ENCODE measurements at regions of chr19 and their contacts with region 1.

Region 1: GRCh38 chr19:57814505-57815251 is at the start of gene ZNF552:
- DNase-seq: peak; percentile 70 to 93 (median 89)
- H3K4me3 ChIP-seq: peak within 1 kb of the TSS; percentile 67 to 99 (median 88)
- H3K27ac ChIP-seq: peak within 1 kb of the TSS in 54 of 59 donors; percentile 4 to 91 (median 73)
- H3K27me3 ChIP-seq: no peaks in the 10 kb centered on the region
- CTCF ChIP-seq: peak in 25 of 56 donors; percentile 8 to 45 (median 21)
- total RNA-seq, gene ZNF552: 2.9 to 13.6 (median 7.9) TPM

Region 2: GRCh38 chr19:57769345-57770131 is 45.1 kb before region 1 on chr19 and contains the start of gene ZNF586:
- intact Hi-C with region 1: loop called in 1 of 2 experiments (anchors 5 kb)
- DNase-seq: peak; percentile 83 to 96 (median 94)
- H3K4me3 ChIP-seq: peak within 1 kb of the TSS; percentile 61 to 98 (median 88)
- H3K27ac ChIP-seq: peak within 1 kb of the TSS in 53 of 59 donors; percentile 7 to 91 (median 80)
- H3K27me3 ChIP-seq: no peaks in the 10 kb centered on the region
- CTCF ChIP-seq: peak in 16 of 56 donors; percentile 7 to 35 (median 22)
- total RNA-seq, gene ZNF586: 14.5 to 49.1 (median 26.2) TPM

Region 3: GRCh38 chr19:58037927-58038687 is 223.4 kb after region 1 on chr19:
- intact Hi-C with region 1: no loop called
- DNase-seq: peak in 7 of 10 donors; percentile 57 to 80 (median 71)
- H3K4me3 ChIP-seq: peak overlapping the region in 50 of 59 donors; percentile 7 to 62 (median 40)
- H3K27ac ChIP-seq: peak overlapping the region in 46 of 59 donors; percentile 5 to 83 (median 58)
- H3K27me3 ChIP-seq: no peaks in the 10 kb centered on the region
- CTCF ChIP-seq: no peak

Measured in dorsolateral prefrontal cortex (tissue), 120 donors.